MCF 10A (cell line): ENCODE measurements at regions of chr12 and their contacts with region 1.

Region 1: DNA sequence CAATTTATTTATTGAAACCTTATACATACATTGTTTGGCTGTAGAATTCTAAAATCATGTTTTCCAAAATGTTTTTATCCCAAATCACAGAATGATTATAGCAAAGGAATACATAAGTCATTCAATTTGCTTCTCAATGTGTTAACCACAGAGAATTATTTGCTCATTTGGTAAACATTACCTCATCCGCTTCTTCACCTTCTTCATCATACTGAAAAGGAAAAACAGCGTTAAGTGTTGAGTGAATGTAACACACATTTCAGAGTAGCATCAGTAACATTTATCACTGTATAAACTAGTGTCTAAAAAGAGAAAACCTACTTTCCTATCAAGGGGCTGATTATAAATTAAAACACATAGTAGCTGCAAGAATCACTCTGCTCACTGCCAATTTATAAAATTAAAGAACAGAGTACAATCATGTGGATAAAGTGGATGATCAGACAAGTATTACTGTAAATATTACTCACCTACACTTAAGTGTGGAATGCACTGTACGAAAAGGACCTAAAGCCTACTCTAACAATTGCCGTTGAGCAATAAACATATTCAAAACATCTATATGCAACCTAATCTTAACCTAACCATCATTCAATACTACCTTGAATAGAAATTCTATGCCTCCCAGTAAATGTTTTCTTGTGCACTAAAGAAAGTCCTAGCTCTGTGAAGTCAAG is 18.1 kb upstream of the PHLDA1 start:
- DNase-seq: no peak
- H3K4me3 Mint-ChIP-seq: no peak overlapping the region
- H3K27ac Mint-ChIP-seq: no peak overlapping the region
- H3K4me1 Mint-ChIP-seq: no peaks in the 10 kb centered on the region
- H3K27me3 Mint-ChIP-seq: no peaks in the 10 kb centered on the region
- CTCF ChIP-seq: no peak

Region 2: GRCh38 chr12:76037130-76038103 is 12.3 kb before region 1 on chr12:
- CTCF ChIA-PET with region 1: interaction called, 10 read pairs
- POLR2A ChIA-PET with region 1: interaction called, 4 read pairs
- intact Hi-C with region 1: no loop called
- DNase-seq: peak; percentile 80
- H3K4me3 Mint-ChIP-seq: no peak overlapping the region
- H3K27ac Mint-ChIP-seq: no peak overlapping the region
- H3K4me1 Mint-ChIP-seq: peaks cover 32% of the 10 kb centered on the region
- H3K27me3 Mint-ChIP-seq: no peaks in the 10 kb centered on the region
- CTCF ChIP-seq: peak; percentile 77